ENCODE measurements at regions of chr1 and their contacts with region 1.

Region 1: GRCh38 chr1:182897696-182898095 is 55.3 kb downstream of the SHCBP1L start:
- DNase-seq: no peak
- H3K4me3 ChIP-seq: no peak overlapping the region
- H3K27ac ChIP-seq: no peak overlapping the region
- H3K4me1 ChIP-seq: no peaks in the 10 kb centered on the region
- H3K27me3 ChIP-seq: no peaks in the 10 kb centered on the region
- CTCF ChIP-seq: no peak
- POLR2A ChIP-seq: no peak

Region 2: GRCh38 chr1:182739545-182739944 is 158.2 kb before region 1 on chr1:
- CTCF ChIA-PET with region 1: no interaction called
- POLR2A ChIA-PET with region 1: no interaction called
- dilution Hi-C with region 1: no loop called
- intact Hi-C with region 1: no loop called
- DNase-seq: no peak
- H3K4me3 ChIP-seq: no peak overlapping the region
- H3K27ac ChIP-seq: no peak overlapping the region
- H3K4me1 ChIP-seq: no peaks in the 10 kb centered on the region
- H3K27me3 ChIP-seq: no peaks in the 10 kb centered on the region
- CTCF ChIP-seq: no peak
- POLR2A ChIP-seq: no peak

Region 3: GRCh38 chr1:182910143-182910542 is 12.4 kb after region 1 on chr1:
- CTCF ChIA-PET with region 1: interaction called, 10 read pairs
- POLR2A ChIA-PET with region 1: no interaction called
- dilution Hi-C with region 1: no loop called
- intact Hi-C with region 1: no loop called
- DNase-seq: no peak
- H3K4me3 ChIP-seq: no peak overlapping the region
- H3K27ac ChIP-seq: no peak overlapping the region
- H3K4me1 ChIP-seq: no peaks in the 10 kb centered on the region
- H3K27me3 ChIP-seq: peaks cover 0 to 2% of the 10 kb centered on the region in 2 experiments
- CTCF ChIP-seq: no peak
- POLR2A ChIP-seq: no peak